T-cell (primary cell): ENCODE measurements at regions of chr5 and their contacts with region 1.

Region 1: GRCh38 chr5:136729901-136730385 is 364.6 kb upstream of the TRPC7 start:
- DNase-seq: no peak
- ATAC-seq: no peak
- H3K4me3 ChIP-seq: no peak overlapping the region
- H3K4me3 Mint-ChIP-seq: no peak overlapping the region
- H3K27ac ChIP-seq: no peak overlapping the region
- H3K27ac Mint-ChIP-seq: no peak overlapping the region
- H3K4me1 ChIP-seq: no peaks in the 10 kb centered on the region
- H3K4me1 Mint-ChIP-seq: no peaks in the 10 kb centered on the region
- H3K27me3 ChIP-seq: no peaks in the 10 kb centered on the region
- H3K27me3 Mint-ChIP-seq: no peaks in the 10 kb centered on the region

Region 2: GRCh38 chr5:136232316-136232715 is 497.6 kb before region 1 on chr5:
- CTCF ChIA-PET with region 1: interaction called in 1 of 2 experiments, 17 read pairs
- POLR2A ChIA-PET with region 1: no interaction called
- DNase-seq: no peak
- ATAC-seq: no peak
- H3K4me3 ChIP-seq: no peak overlapping the region
- H3K4me3 Mint-ChIP-seq: no peak overlapping the region
- H3K27ac ChIP-seq: no peak overlapping the region
- H3K27ac Mint-ChIP-seq: no peak overlapping the region
- H3K4me1 ChIP-seq: no peaks in the 10 kb centered on the region
- H3K4me1 Mint-ChIP-seq: no peaks in the 10 kb centered on the region
- H3K27me3 ChIP-seq: peaks cover 0 to 3% of the 10 kb centered on the region in 2 experiments
- H3K27me3 Mint-ChIP-seq: peaks cover 7 to 18% of the 10 kb centered on the region in 2 donors